ENCODE measurements at regions of chr15 and their contacts with region 1.

Region 1: GRCh38 chr15:77966540-77967290 is 110.8 kb downstream of the TBC1D2B start:
- DNase-seq: peak; percentile 62
- ATAC-seq: peak; percentile 90
- H3K4me3 ChIP-seq: no peak overlapping the region
- H3K27ac ChIP-seq: no peak overlapping the region
- H3K4me1 ChIP-seq: no peaks in the 10 kb centered on the region
- H3K27me3 ChIP-seq: no peaks in the 10 kb centered on the region
- CTCF ChIP-seq: peak; percentile 90

Region 2: GRCh38 chr15:78023865-78024518 is 57.3 kb after region 1 on chr15:
- intact Hi-C with region 1: no loop called
- DNase-seq: peak; percentile 69
- ATAC-seq: peak; percentile 60
- H3K4me3 ChIP-seq: no peak overlapping the region
- H3K27ac ChIP-seq: peak overlapping the region; percentile 75
- H3K4me1 ChIP-seq: peaks cover 42% of the 10 kb centered on the region
- H3K27me3 ChIP-seq: no peaks in the 10 kb centered on the region
- CTCF ChIP-seq: no peak

Region 3: DNA sequence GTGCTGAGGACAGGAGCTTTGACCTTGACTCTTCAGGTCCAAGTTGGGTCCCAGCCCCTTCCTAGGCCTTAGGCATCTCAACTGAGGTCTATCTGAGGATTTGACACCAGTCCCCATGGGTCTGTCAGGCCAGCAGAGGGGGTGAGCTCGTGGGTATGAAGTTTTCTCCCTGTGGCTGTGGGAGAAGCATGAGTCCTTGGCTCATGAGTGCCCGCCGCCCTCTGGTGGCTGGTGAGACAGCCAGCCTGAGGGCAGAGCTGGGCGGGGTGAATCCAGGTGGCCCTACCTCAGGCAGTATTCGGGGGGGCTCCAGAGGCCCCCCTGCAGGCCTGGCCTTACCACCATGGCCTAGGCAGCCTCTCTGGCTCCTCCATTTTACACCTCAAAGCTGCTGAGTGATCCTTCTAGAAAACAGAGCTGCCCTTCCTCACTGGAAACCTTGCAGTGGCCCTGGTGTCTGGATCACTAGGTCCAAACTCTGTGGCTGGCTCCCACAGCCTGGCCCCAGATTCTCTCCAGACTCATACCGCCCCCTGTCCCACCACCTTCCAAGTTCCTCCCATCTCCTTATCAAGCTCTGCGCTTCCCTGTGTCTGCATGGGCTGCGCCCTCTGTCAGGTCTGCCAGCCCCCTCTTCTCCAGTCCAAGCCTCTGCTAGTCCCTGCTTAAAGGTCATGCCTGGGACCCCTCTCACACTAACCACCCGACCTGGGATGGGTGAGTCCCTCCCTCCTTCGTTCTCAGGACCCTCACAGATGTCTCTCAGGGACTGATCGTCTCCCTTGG is 141.8 kb after region 1 on chr15:
- intact Hi-C with region 1: loop called (anchors 5 kb)
- DNase-seq: peak; percentile 93
- ATAC-seq: peak; percentile 94
- H3K4me3 ChIP-seq: no peak overlapping the region
- H3K27ac ChIP-seq: no peak overlapping the region
- H3K4me1 ChIP-seq: peaks cover 21% of the 10 kb centered on the region
- H3K27me3 ChIP-seq: no peaks in the 10 kb centered on the region
- CTCF ChIP-seq: peak; percentile 93

Region 4: DNA sequence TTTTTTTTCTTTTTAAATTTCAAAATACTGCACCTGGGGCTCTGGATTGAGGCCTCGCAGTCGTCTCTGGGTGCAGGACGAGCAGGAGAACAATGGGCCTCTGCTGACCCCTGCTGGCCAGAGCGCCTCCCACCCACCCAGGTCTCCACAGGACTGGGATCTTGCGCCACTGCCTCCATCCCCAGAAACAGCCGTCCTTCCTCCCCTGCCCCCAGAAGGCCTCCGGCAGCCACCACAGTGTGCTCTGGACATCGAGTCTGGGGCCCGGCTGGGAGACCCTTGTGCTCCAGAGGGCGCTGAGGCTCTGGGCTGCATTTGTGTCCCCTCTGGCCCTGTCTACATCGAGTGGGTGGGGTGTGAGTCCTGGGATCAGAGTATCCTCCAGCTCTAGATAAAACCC is 274.3 kb after region 1 on chr15:
- intact Hi-C with region 1: loop called (anchors 10 kb)
- DNase-seq: peak; percentile 92
- ATAC-seq: peak; percentile 97
- H3K4me3 ChIP-seq: no peak overlapping the region
- H3K27ac ChIP-seq: no peak overlapping the region
- H3K4me1 ChIP-seq: no peaks in the 10 kb centered on the region
- H3K27me3 ChIP-seq: no peaks in the 10 kb centered on the region
- CTCF ChIP-seq: peak; percentile 87

Measured in upper lobe of right lung (tissue), 1 donor.